ENCODE measurements at regions of chr9 and their contacts with region 1.

Region 1: GRCh38 chr9:111631071-111631971 is at the start of gene DNAJC25:
- DNase-seq: peak; percentile 99

Region 2: DNA sequence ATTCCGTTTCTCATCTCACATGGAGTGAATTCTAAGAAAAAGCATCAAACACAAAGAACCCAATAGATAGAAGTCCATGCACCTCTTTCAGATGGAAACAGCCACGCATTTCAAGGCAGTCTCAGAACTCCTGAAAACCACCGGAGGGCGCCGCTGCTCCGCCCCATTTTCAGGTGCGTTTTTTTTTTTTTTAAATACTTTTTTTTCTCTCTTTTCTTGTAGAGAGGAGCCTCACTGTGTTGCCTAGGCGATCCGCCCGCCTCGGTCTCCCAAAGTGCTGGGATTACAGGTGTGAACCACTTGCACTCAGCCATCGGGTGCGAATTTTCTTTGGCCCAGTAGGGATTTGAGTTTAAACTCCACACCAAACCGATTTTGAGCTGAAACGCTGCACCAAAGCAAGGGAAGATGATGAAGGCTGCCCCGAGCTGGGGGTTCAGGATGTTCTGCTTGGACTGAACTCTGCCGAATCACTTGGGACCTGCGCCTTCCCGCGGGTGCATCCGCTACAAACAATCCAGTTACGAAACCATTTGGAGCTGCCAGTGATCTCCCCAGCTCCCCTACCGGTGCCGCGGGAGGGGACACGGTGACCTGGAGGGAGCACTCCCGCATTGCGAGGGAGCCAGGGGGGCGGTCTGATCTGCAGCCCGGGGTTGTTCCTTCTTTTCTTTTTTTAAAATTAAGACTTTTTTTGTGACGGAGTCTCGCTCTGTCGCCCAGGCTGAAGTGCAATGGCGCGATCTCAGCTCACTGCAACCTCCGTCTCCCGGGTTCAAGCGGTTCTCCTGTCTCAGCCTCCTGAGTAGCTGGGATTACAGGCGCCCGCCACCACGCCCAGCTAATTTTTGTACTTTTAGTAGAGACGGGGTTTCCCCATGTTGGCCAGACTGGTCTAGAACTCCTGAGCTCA is 33.2 kb before region 1 on chr9:
- CTCF ChIA-PET with region 1: interaction called, 3 read pairs
- POLR2A ChIA-PET with region 1: interaction called, 17 read pairs
- DNase-seq: peak; percentile 27

Region 3: GRCh38 chr9:111615928-111616327 is 15.4 kb before region 1 on chr9:
- CTCF ChIA-PET with region 1: no interaction called
- POLR2A ChIA-PET with region 1: interaction called, 10 read pairs
- DNase-seq: no peak

Region 4: DNA sequence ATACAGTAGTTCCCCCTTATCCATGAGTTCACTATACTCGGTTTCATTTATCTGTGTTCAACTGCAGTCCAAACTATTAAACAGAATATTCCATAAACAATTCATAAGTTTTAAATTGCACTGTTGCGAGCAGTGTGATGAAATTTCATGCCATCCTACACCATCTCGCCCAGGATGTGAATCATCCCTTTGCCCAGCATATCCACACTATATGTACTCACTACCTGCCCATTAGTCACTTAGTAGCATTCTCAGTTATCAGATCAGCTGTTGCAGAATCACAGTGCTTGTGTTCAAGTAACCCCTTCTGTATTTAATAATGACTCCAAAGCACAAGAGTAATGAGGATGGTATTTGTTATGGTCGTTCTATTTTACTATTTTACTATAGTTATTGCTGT is 112.0 kb after region 1 on chr9:
- CTCF ChIA-PET with region 1: no interaction called
- POLR2A ChIA-PET with region 1: no interaction called
- DNase-seq: no peak

Measured in HEK293T (cell line).